ENCODE measurements at regions of chr11 and their contacts with region 1.

Region 1: GRCh38 chr11:75867775-75868374 is 52.9 kb downstream of the UVRAG start:
- DNase-seq: peak in 2 of 10 donors; percentile 39 to 44
- H3K4me3 ChIP-seq: no peak overlapping the region
- H3K27ac ChIP-seq: peak overlapping the region; percentile 46 to 100 (median 92)
- H3K27me3 ChIP-seq: no peaks in the 10 kb centered on the region
- CTCF ChIP-seq: peak; percentile 79 to 100 (median 92)

Region 2: DNA sequence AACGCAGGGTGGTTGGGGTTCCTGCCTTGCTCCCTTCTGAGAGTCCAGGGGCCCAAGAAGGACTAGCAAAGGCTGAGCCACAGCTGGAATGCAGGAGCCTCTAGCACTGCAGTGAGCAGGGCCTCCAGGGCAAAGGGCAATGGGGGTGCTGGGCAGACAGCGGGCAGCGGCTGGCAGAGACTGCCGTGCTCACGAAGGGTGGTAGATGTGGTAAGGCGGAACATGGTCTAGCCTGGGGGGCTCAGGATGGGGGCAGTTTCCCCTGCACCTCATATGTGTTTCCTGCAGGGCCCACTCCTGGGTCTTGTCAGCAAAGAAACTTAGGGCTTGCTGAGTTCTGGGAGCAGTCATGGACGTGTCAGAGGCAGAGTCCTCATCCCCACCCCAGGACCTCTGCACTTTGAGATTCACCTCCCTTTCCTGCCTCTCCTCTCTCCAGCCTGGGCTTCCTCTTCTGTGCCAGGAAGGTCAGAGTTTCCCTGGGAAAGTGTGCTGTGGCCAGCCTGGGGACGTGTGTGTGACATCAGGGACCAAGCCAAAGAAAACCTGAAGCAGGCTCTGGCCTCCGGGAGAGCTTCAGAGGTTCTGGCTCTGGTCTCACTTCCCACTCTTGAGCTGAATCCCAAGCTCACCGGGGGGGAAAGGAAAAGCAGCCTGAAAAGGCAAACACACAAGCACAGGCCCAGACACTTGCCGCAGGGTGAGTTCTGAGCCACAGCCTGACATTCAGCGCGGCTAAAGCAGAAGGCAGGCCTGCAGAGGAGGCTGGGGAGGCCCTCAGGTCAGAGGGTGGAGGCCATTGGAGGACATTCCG is 145.8 kb before region 1 on chr11:
- intact Hi-C with region 1: loop called in 1 of 2 experiments (anchors 10 kb)
- DNase-seq: no peak
- H3K4me3 ChIP-seq: no peak overlapping the region
- H3K27ac ChIP-seq: peak overlapping the region in 1 of 59 donors; percentile 17
- H3K27me3 ChIP-seq: no peaks in the 10 kb centered on the region
- CTCF ChIP-seq: no peak

Region 3: DNA sequence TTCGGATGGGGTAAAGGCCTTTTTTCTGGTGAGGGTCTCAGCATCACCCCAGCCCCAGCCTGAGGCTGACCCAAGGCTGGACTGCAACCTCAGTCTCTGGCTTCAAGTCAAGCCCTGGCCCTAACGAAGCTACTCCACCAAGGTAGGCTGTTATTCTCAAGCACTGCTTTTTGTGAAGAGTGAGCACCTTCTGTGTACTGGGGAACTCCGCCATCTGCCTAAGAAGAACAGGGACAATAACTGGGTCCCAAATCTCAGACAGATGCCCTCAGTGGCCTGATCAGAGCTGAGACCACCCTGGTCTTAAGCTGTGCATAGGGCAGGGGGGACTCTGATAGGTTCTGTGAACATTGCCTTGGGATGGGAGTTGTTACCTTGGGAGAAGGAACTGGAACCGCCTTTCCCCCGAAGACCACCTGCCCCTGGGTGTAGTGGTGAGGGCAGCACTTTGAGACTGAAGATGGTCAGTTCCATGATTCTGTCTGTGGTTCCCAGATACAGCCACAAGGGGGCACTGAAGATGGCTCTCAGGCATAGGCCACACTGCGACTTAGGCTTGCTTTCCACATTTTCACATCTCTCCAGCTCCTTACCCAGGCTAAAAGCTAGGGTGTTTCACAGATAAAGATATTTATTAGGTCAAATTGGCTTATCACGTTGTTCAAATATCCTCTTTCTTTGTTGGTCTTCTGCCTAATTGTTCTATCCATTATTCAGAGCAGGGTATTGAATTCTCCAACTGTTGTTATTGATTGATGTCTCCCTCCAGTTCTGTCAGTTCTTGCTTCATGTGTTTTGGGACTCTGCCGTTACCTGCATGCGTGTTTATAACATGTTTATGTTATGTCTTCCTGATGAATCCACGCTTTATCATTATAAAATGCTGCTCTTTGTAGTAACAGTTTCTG is 64.7 kb before region 1 on chr11:
- intact Hi-C with region 1: loop called in 1 of 2 experiments (anchors 2 kb)
- DNase-seq: peak; percentile 61 to 92 (median 80)
- H3K4me3 ChIP-seq: peak overlapping the region in 1 of 59 donors; percentile 1
- H3K27ac ChIP-seq: peak overlapping the region in 50 of 59 donors; percentile 3 to 81 (median 47)
- H3K27me3 ChIP-seq: no peaks in the 10 kb centered on the region
- CTCF ChIP-seq: peak; percentile 72 to 98 (median 95)

Region 4: GRCh38 chr11:75814686-75815344 is 53.1 kb before region 1 on chr11 and contains the start of gene UVRAG:
- intact Hi-C with region 1: loop called (anchors 5 kb)
- DNase-seq: peak; percentile 98 to 99 (median 99)
- H3K4me3 ChIP-seq: peak within 1 kb of the TSS; percentile 71 to 99 (median 93)
- H3K27ac ChIP-seq: peak within 1 kb of the TSS; percentile 45 to 97 (median 92)
- H3K27me3 ChIP-seq: no peaks in the 10 kb centered on the region
- CTCF ChIP-seq: peak in 27 of 56 donors; percentile 7 to 56 (median 28)
- total RNA-seq, gene UVRAG: 29.8 to 76.8 (median 44.7) TPM

Measured in dorsolateral prefrontal cortex (tissue), 120 donors.